ENCODE measurements at regions of chr2 and their contacts with region 1.

Region 1: GRCh38 chr2:68789603-68790002 is 55.0 kb downstream of the ARHGAP25 start:
- DNase-seq: peak; percentile 96
- ATAC-seq: peak; percentile 89
- H3K4me3 ChIP-seq: peak overlapping the region in 1 of 5 experiments; percentile 27
- H3K4me3 Mint-ChIP-seq: peak overlapping the region; percentile 80
- H3K27ac ChIP-seq: peak overlapping the region; percentile 91 to 96
- H3K27ac Mint-ChIP-seq: peak overlapping the region; percentile 99
- H3K4me1 ChIP-seq: peaks cover 94 to 96% of the 10 kb centered on the region in 2 donors
- H3K4me1 Mint-ChIP-seq: peaks cover 55% of the 10 kb centered on the region
- H3K27me3 ChIP-seq: no peaks in the 10 kb centered on the region
- H3K27me3 Mint-ChIP-seq: no peaks in the 10 kb centered on the region
- CTCF ChIP-seq: no peak

Region 2: DNA sequence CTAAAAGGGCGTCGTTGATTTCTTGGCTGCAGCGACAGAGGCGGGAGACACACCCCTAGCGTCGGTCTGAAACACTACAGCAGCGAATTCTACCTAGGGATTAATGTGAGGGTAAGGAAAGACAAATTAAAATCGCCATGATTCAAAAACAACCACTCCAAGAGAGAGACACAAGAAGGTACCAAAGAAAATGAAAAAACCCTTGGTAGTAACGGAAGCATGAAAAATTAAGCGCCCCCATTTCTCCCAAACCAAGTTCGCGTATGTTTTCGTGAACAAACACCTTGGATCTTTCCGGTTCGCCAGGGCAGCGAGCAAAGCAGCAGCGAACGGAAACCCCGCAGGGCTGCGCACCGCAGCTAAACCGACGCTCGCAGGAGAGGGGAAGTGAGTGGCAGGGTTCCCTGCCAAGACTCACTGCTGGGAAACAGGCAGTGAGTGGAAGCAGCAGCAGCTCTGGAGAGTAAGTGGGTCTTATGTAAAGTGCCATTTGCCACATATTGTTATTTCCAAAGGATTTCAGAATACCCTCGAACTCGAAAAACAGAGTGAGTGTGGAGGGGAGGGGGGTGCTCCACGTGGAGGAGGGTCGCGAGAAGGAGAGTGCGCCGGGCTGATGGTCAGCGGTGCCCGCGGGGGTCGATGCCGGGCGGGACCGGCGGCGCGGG is 538.3 kb before region 1 on chr2:
- CTCF ChIA-PET with region 1: no interaction called
- POLR2A ChIA-PET with region 1: no interaction called
- intact Hi-C with region 1: loop called (anchors 10 kb)
- DNase-seq: peak; percentile 92
- ATAC-seq: peak; percentile 60
- H3K4me3 ChIP-seq: peak overlapping the region; percentile 76 to 97 (median 96)
- H3K4me3 Mint-ChIP-seq: peak overlapping the region; percentile 90
- H3K27ac ChIP-seq: peak overlapping the region; percentile 86 to 92
- H3K27ac Mint-ChIP-seq: peak overlapping the region; percentile 93
- H3K4me1 ChIP-seq: peaks cover 39 to 55% of the 10 kb centered on the region in 2 donors
- H3K4me1 Mint-ChIP-seq: peaks cover 36% of the 10 kb centered on the region
- H3K27me3 ChIP-seq: no peaks in the 10 kb centered on the region
- H3K27me3 Mint-ChIP-seq: no peaks in the 10 kb centered on the region
- CTCF ChIP-seq: peak; percentile 77

Region 3: DNA sequence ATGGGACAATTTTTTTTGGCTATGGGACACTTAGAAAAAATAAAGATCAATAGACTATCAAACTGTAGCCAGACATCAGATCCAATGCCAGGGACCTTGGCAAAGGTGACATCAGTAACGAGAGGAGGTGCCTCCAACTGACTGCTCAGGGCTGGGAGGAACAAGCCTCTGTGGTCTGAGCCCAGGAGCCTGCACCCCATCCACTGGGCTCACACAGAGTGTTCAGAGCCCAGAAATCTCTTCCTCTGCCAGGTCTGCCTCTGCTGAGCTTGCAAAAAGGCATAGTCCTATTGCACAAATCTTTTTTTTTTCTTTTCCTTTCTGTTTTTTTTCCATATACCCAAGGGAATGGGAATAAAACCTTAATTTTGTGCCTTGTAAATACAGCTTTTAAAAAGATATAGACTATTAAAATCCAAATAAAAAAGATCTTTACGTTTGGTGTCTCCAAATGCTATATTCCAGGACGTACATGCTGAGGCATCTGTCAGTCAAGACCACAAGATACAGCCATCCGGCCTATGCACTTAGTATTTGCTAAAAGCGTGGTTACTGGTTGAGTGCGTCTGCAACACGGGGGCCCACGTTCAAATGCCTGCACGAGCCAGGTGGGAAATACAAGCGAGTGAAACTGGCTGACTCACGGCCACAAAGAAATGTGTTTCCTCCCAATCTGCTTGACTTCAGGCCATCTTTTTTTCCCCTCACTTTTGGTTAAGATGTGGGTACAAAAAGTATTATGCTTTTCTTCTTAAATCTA is 62.8 kb before region 1 on chr2:
- CTCF ChIA-PET with region 1: no interaction called
- POLR2A ChIA-PET with region 1: no interaction called
- intact Hi-C with region 1: loop called (anchors 2 kb)
- DNase-seq: peak; percentile 91
- ATAC-seq: peak; percentile 96
- H3K4me3 ChIP-seq: peak overlapping the region in 1 of 5 experiments; percentile 4
- H3K4me3 Mint-ChIP-seq: peak overlapping the region; percentile 49
- H3K27ac ChIP-seq: peak overlapping the region in 1 of 2 donors; percentile 52
- H3K27ac Mint-ChIP-seq: peak overlapping the region; percentile 82
- H3K4me1 ChIP-seq: peaks cover 32 to 54% of the 10 kb centered on the region in 2 donors
- H3K4me1 Mint-ChIP-seq: peaks cover 61% of the 10 kb centered on the region
- H3K27me3 ChIP-seq: no peaks in the 10 kb centered on the region
- H3K27me3 Mint-ChIP-seq: no peaks in the 10 kb centered on the region
- CTCF ChIP-seq: no peak

Region 4: GRCh38 chr2:68766376-68766845 is 23.2 kb before region 1 on chr2:
- CTCF ChIA-PET with region 1: interaction called, 15 read pairs
- POLR2A ChIA-PET with region 1: interaction called, 14 read pairs
- intact Hi-C with region 1: no loop called
- DNase-seq: peak; percentile 74
- ATAC-seq: peak; percentile 44
- H3K4me3 ChIP-seq: peak overlapping the region in 3 of 5 experiments; percentile 9 to 48 (median 16)
- H3K4me3 Mint-ChIP-seq: peak overlapping the region; percentile 80
- H3K27ac ChIP-seq: peak overlapping the region; percentile 93 to 99
- H3K27ac Mint-ChIP-seq: peak overlapping the region; percentile 98
- H3K4me1 ChIP-seq: peaks cover 97 to 100% of the 10 kb centered on the region in 2 donors
- H3K4me1 Mint-ChIP-seq: peaks cover 94% of the 10 kb centered on the region
- H3K27me3 ChIP-seq: no peaks in the 10 kb centered on the region
- H3K27me3 Mint-ChIP-seq: no peaks in the 10 kb centered on the region
- CTCF ChIP-seq: no peak

Region 5: GRCh38 chr2:68807821-68808266 is 18.2 kb after region 1 on chr2:
- CTCF ChIA-PET with region 1: no interaction called
- POLR2A ChIA-PET with region 1: interaction called, 6 read pairs
- intact Hi-C with region 1: loop called (anchors 2 kb)
- DNase-seq: no peak
- ATAC-seq: no peak
- H3K4me3 ChIP-seq: no peak overlapping the region
- H3K4me3 Mint-ChIP-seq: no peak overlapping the region
- H3K27ac ChIP-seq: peak overlapping the region; percentile 23 to 84
- H3K27ac Mint-ChIP-seq: peak overlapping the region; percentile 89
- H3K4me1 ChIP-seq: peaks cover 28 to 29% of the 10 kb centered on the region in 2 donors
- H3K4me1 Mint-ChIP-seq: peaks cover 61% of the 10 kb centered on the region
- H3K27me3 ChIP-seq: no peaks in the 10 kb centered on the region
- H3K27me3 Mint-ChIP-seq: no peaks in the 10 kb centered on the region
- CTCF ChIP-seq: no peak

Region 6: GRCh38 chr2:68837164-68837860 is 47.7 kb after region 1 on chr2:
- CTCF ChIA-PET with region 1: interaction called, 14 read pairs
- POLR2A ChIA-PET with region 1: interaction called, 6 read pairs
- intact Hi-C with region 1: loop called (anchors 1 kb)
- DNase-seq: peak; percentile 78
- ATAC-seq: peak; percentile 46
- H3K4me3 ChIP-seq: peak overlapping the region in 1 of 5 experiments; percentile 8
- H3K4me3 Mint-ChIP-seq: peak overlapping the region; percentile 26
- H3K27ac ChIP-seq: no peak overlapping the region
- H3K27ac Mint-ChIP-seq: peak overlapping the region; percentile 75
- H3K4me1 ChIP-seq: peaks cover 42 to 47% of the 10 kb centered on the region in 2 donors
- H3K4me1 Mint-ChIP-seq: peaks cover 54% of the 10 kb centered on the region
- H3K27me3 ChIP-seq: no peaks in the 10 kb centered on the region
- H3K27me3 Mint-ChIP-seq: no peaks in the 10 kb centered on the region
- CTCF ChIP-seq: peak; percentile 82

Measured in B cell (primary cell).